HCT116 (cell line): ENCODE measurements at regions of chr21 and their contacts with region 1.

Region 1: DNA sequence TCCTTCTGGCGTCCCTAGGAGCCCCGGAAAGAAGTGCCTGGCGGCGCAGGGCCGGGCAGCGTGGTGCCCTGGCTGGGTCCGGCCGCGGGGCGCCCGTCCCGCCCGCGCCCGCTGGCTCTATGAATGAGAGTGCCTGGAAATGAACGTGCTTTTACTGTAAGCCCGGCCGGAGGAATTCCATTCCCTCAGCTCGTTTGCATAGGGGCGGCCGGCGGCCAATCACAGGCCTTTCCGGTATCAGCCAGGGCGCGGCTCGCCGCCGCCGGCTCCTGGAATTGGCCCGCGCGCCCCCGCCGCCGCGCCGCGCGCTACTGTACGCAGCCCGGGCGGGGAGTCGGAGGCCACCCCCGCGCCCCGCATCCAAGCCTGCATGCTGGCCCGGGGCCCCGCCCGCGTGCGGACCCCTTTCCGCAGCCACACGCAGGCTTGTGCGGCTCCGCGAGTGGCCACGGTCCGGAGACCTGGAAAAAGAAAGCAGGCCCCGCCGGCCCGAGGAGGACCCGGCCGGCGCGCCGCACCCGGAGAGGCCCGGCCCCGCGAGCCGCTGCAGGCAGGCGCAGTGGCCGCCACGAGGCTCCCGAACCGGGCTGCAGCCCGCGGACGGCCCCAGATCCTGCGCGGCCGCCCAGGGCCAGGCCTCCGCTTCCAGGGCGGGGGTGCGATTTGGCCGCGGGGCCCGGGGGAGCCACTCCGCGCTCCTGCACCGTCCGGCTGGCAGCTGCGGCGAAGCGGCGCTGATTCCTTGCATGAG is 160.4 kb downstream of the RUNX1 start:
- DNase-seq: peak; percentile 86
- ATAC-seq: peak; percentile 76
- H3K4me3 ChIP-seq: peak overlapping the region; percentile 68 to 81
- H3K27ac ChIP-seq: peak overlapping the region; percentile 93
- H3K4me1 ChIP-seq: peaks cover 21 to 46% of the 10 kb centered on the region in 2 experiments
- H3K27me3 ChIP-seq: no peaks in the 10 kb centered on the region
- CTCF ChIP-seq: no peak
- POLR2A ChIP-seq: peak; percentile 62
- RAD21 ChIP-seq: no peak

Region 2: DNA sequence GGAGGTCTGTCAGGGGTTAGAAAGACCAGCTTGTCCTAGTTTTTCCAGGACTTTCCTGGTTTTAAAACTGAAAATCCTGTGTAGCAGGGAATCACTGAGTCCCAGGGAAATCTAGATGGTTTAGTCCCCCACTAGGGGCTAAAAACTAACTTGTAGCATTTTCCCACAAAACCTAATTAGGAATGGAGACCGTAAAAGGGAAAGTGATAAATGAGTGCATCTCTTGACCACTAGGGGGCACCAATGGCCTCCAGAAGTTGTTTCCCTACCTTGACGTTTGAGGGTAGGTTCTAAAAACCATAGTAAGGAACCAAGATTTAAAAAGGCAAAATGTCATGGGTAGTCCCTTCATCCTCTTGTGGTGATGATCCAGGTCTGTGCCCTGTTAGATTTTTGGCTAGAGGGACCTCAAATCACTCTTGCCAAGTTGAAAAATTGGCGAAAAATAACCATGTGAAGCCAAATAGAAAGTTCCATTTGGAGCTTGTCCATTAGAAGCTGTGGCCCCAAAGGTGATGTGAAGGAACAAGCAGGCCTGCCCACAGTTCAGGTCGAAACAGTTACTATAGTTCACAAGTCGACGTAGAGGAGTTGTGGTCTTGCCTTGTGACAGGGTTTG is 195.4 kb before region 1 on chr21:
- CTCF ChIA-PET with region 1: interaction called, 4 read pairs
- POLR2A ChIA-PET with region 1: no interaction called
- RAD21 ChIA-PET with region 1: no interaction called
- intact Hi-C with region 1: loop called (anchors 5 kb)
- DNase-seq: peak; percentile 59
- ATAC-seq: peak; percentile 73
- H3K4me3 ChIP-seq: no peak overlapping the region
- H3K27ac ChIP-seq: no peak overlapping the region
- H3K4me1 ChIP-seq: peaks cover 10 to 15% of the 10 kb centered on the region in 2 experiments
- H3K27me3 ChIP-seq: peaks cover 3% of the 10 kb centered on the region; the same call in 1 of the 2 replicates
- CTCF ChIP-seq: peak; percentile 35 to 87 (median 78); a peak in 5 of 6 replicates
- POLR2A ChIP-seq: no peak
- RAD21 ChIP-seq: peak; percentile 76

Region 3: DNA sequence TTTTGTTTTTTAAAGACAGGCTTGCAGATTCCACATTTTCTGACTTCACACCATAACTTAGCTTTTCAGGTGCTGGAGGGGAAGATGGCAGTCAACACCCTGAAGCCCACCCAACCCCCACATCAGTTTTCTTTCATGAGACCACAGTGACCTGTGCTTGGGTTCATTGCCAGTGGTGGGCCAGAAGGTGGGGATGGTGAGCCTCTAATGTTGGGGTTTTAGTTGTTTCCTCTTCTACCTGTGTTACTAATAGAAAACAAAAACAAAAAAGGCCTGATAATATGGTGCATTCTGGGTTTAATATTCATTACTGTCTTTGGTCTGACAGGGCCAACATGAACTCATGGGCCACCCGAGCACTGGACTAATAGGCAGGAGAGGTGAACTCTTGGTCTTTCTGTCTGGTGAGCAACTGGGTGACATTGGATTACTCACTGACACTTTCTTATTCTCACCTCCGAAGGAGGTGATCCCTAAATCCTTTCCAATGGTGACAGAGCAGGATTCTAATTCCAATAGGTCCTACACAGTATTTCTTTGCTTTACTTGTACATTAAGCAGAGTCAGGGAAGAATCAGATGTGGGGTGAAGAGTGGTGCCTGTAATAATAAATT is 87.1 kb before region 1 on chr21:
- CTCF ChIA-PET with region 1: interaction called, 3 read pairs
- POLR2A ChIA-PET with region 1: interaction called, 33 read pairs
- RAD21 ChIA-PET with region 1: no interaction called
- intact Hi-C with region 1: loop called (anchors 2 kb)
- DNase-seq: no peak
- ATAC-seq: peak; percentile 50
- H3K4me3 ChIP-seq: no peak overlapping the region
- H3K27ac ChIP-seq: peak overlapping the region; percentile 56
- H3K4me1 ChIP-seq: peaks cover 59 to 80% of the 10 kb centered on the region in 2 experiments
- H3K27me3 ChIP-seq: no peaks in the 10 kb centered on the region
- CTCF ChIP-seq: peak in 2 of 3 experiments; percentile 53 to 54; a peak in 4 of 6 replicates
- POLR2A ChIP-seq: no peak
- RAD21 ChIP-seq: no peak

Region 4: DNA sequence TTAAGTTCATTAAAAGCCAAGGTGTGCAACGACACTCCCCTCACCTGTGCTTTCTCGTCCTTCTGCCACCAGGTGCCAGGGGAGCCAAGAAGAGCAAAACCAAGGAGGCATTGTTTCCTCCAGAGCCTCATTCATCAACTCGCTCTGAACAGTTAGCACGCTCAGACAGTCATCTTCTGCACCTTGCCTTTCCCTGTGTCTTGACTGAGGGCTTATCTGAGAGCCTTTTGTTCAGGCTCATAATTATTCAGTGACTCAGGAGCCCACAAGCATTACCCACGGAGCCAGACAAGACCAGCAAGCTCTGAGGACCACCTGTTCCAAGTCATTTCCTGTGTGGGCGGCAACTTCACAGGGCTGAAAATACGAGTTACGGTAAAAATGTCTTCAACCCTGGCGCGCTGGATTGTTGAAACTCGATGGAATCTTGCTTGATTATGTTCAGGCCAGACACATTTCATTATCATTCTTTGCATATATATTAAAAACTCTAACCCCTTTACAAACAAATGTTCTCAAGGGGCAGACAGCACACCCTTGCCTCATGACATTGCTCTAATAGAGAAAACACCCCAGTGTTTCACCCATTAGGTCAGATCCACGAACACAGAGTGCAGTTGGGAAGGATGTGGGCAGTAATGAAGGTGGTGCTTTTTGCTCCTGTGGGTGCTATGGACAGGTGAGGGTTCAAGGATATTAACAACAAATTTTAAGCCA is 250.1 kb after region 1 on chr21:
- CTCF ChIA-PET with region 1: no interaction called
- POLR2A ChIA-PET with region 1: interaction called, 11 read pairs
- RAD21 ChIA-PET with region 1: no interaction called
- intact Hi-C with region 1: no loop called
- DNase-seq: peak; percentile 93
- ATAC-seq: peak; percentile 89
- H3K4me3 ChIP-seq: peak overlapping the region; percentile 14 to 15
- H3K27ac ChIP-seq: peak overlapping the region; percentile 60
- H3K4me1 ChIP-seq: peaks cover 38 to 47% of the 10 kb centered on the region in 2 experiments
- H3K27me3 ChIP-seq: no peaks in the 10 kb centered on the region
- CTCF ChIP-seq: peak in 2 of 3 experiments; percentile 4 to 40; a peak in 2 of 6 replicates
- POLR2A ChIP-seq: no peak
- RAD21 ChIP-seq: peak; percentile 57

Region 5: DNA sequence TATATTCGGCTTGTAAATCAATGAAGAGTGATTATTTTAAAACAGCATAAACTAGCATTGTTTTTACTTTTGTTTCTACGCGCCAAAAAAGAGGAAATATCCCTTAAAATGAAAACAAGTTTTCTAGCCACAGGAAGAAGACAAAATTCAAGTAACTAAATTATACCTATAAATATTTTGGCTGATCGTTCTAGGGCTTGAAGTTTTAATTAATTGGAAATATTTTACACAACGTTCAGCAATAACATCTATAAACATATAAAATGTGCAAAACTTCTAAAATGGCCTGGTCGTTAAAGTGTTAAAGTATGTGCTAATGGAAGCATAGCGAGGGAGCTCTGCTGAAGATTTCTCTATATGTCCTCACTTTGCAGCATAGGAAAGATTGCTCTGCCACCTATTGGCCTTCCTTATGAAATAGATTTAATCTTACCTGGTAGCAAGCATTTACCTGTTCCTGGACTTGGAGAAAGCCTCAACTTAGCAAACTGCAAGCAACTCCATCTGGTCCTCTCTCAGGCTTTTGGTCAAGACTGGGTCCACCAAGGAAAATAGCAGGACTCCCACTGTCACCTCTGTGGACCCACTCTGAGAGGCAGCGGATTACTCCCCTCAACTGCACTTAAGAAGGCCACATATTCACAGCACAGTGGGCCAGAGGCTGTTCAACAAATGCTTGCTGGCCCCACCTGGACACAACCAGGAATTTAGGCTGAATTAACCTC is 511.7 kb after region 1 on chr21:
- CTCF ChIA-PET with region 1: interaction called, 16 read pairs
- POLR2A ChIA-PET with region 1: interaction called, 17 read pairs
- RAD21 ChIA-PET with region 1: interaction called, 5 to 10 read pairs
- intact Hi-C with region 1: loop called (anchors 1 kb)
- DNase-seq: peak; percentile 81
- ATAC-seq: peak; percentile 96
- H3K4me3 ChIP-seq: no peak overlapping the region
- H3K27ac ChIP-seq: no peak overlapping the region
- H3K4me1 ChIP-seq: peaks cover 6 to 29% of the 10 kb centered on the region in 2 experiments; a peak in 3 of 4 replicates
- H3K27me3 ChIP-seq: no peaks in the 10 kb centered on the region
- CTCF ChIP-seq: peak; percentile 52 to 71 (median 65); a peak in 5 of 6 replicates
- POLR2A ChIP-seq: no peak
- RAD21 ChIP-seq: peak; percentile 89

Region 6: DNA sequence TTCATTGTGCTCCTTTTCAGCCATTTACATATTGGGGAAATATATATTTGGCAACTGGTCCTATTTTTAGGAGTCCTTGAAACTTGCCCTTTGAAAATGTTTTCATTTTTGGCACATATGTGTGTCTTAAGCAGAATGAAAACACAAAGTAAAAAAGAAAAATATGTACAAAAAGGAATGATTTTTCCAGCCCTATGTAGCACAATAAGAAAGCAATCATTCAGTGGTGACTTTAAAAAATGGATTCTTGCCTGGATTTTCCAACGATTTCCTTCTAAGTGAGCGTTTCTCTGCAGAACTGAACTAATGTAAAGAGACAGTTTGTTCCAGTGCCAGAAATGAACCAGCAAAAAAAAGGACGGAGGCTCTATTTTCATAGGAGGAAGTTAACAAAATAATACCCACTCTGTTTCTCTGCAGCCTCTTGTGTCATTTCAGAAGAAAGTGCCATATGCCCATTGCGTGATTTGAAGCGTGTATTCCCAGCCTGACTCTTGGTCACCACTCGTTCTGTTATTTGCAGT is 831.5 kb after region 1 on chr21:
- CTCF ChIA-PET with region 1: no interaction called
- POLR2A ChIA-PET with region 1: no interaction called
- RAD21 ChIA-PET with region 1: no interaction called
- intact Hi-C with region 1: no loop called
- DNase-seq: no peak
- ATAC-seq: no peak
- H3K4me3 ChIP-seq: no peak overlapping the region
- H3K27ac ChIP-seq: no peak overlapping the region
- H3K4me1 ChIP-seq: no peaks in the 10 kb centered on the region
- H3K27me3 ChIP-seq: no peaks in the 10 kb centered on the region
- CTCF ChIP-seq: no peak
- POLR2A ChIP-seq: no peak
- RAD21 ChIP-seq: no peak

Region 7: DNA sequence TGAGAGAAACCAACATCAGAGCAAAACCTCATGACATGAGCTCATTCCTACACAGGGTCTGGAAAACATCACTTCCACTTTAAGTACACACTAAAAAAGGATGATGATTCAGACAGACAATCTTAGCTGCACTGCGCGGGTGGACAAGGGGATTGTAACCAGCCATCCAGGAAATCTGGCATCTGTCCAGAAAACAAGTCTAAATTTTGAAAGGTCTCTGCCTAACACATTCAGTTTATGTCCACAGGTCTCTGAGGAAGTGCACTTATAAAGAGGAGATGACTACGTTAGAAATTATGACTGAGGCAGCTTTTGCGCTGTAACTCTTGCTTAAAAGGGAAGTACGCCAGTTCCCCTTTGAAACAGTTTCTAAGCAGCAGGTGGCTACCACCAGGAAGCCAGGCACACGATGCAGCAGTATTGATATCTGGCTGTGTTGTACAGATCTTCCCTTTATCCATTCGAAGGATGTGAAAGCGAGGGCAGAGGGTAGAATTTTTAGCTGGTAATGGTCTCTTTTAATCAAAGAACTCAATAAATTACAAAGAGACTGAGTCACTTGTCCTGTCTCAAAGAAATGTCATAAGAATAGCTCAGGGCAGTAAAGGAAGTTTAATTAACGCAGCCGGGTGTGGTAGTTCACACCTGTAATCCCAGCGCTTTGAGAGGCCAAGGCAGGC is 1043.6 kb after region 1 on chr21:
- CTCF ChIA-PET with region 1: no interaction called
- POLR2A ChIA-PET with region 1: no interaction called
- RAD21 ChIA-PET with region 1: no interaction called
- intact Hi-C with region 1: loop called (anchors 2 kb)
- DNase-seq: peak; percentile 91
- ATAC-seq: peak; percentile 89
- H3K4me3 ChIP-seq: 0 out of 4 replicates have a peak overlapping the region, but pooled peaks of 1 of the 2 experiments have one; percentile 4
- H3K27ac ChIP-seq: peak overlapping the region; percentile 42
- H3K4me1 ChIP-seq: peaks cover 23 to 31% of the 10 kb centered on the region in 2 experiments
- H3K27me3 ChIP-seq: no peaks in the 10 kb centered on the region
- CTCF ChIP-seq: no peak
- POLR2A ChIP-seq: no peak
- RAD21 ChIP-seq: 0 out of 2 replicates have a peak, but pooled peaks have one; percentile 4